ENCODE measurements at regions of chr9 and their contacts with region 1.

Region 1: GRCh38 chr9:86434039-86434726 is 80.0 kb upstream of the TUT7 start:
- DNase-seq: no peak
- ATAC-seq: no peak

Region 2: GRCh38 chr9:87310827-87311523 is 876.8 kb after region 1 on chr9:
- intact Hi-C with region 1: loop called in 1 of 2 experiments (anchors 10 kb)
- DNase-seq: no peak
- ATAC-seq: no peak

Region 3: GRCh38 chr9:87324613-87325194 is 890.5 kb after region 1 on chr9:
- intact Hi-C with region 1: loop called (anchors 5 to 10 kb)
- DNase-seq: no peak
- ATAC-seq: peak; percentile 61